ENCODE measurements at regions of chr7 and their contacts with region 1.

Region 1: GRCh38 chr7:24812310-24812945 is 55.2 kb upstream of the GSDME start:
- DNase-seq: no peak
- H3K4me3 ChIP-seq: no peak overlapping the region
- CTCF ChIP-seq: peak; percentile 69

Region 2: GRCh38 chr7:24794751-24795731 is 17.4 kb before region 1 on chr7:
- CTCF ChIA-PET with region 1: interaction called, 114 read pairs
- POLR2A ChIA-PET with region 1: no interaction called
- DNase-seq: no peak
- H3K4me3 ChIP-seq: no peak overlapping the region
- CTCF ChIP-seq: no peak

Region 3: DNA sequence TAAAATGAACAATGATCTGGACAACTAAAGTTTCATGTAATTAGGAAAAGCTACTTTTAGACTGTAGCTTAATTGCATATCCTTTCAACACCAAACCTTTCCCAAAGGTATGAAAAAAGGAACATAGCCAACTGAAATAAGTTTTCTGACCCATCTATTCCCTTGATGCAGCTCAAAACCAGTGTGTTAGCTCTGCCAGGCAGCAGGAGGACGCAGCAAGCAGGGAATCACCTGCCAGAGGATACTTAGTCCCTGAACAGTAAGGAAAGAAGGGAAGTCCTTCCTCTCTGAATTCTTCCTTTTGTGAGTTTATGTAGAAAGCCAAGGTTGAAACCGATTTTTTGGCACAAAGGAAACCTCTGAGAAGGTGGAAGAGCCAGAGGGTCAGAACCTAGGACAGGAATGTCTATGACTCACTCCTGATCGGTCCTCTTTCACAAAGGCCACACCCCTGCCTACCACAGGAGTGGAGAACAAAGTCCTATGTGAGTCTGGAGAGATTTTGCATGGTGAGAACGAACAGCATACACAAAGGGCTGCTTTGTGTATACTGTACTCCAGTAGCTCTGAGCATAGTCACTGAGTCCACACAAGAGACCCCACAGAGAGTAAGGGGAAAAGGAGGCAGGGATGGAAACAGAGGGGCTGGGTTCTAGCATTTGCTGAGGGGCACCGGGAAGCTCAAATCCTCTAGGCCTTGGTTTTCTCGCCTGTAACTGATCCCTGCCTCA is 13.7 kb after region 1 on chr7:
- CTCF ChIA-PET with region 1: interaction called, 43 read pairs
- POLR2A ChIA-PET with region 1: no interaction called
- DNase-seq: no peak
- H3K4me3 ChIP-seq: no peak overlapping the region
- CTCF ChIP-seq: no peak

Region 4: GRCh38 chr7:24979863-24980533 is 167.6 kb after region 1 on chr7 and contains the start of gene OSBPL3:
- CTCF ChIA-PET with region 1: interaction called, 36 read pairs
- POLR2A ChIA-PET with region 1: interaction called, 3 read pairs
- DNase-seq: peak; percentile 66
- H3K4me3 ChIP-seq: peak within 1 kb of the TSS; percentile 76
- CTCF ChIP-seq: no peak

Region 5: GRCh38 chr7:25083201-25083600 is 270.8 kb after region 1 on chr7:
- CTCF ChIA-PET with region 1: interaction called, 928 read pairs
- POLR2A ChIA-PET with region 1: no interaction called
- DNase-seq: no peak
- H3K4me3 ChIP-seq: no peak overlapping the region
- CTCF ChIP-seq: no peak

Region 6: DNA sequence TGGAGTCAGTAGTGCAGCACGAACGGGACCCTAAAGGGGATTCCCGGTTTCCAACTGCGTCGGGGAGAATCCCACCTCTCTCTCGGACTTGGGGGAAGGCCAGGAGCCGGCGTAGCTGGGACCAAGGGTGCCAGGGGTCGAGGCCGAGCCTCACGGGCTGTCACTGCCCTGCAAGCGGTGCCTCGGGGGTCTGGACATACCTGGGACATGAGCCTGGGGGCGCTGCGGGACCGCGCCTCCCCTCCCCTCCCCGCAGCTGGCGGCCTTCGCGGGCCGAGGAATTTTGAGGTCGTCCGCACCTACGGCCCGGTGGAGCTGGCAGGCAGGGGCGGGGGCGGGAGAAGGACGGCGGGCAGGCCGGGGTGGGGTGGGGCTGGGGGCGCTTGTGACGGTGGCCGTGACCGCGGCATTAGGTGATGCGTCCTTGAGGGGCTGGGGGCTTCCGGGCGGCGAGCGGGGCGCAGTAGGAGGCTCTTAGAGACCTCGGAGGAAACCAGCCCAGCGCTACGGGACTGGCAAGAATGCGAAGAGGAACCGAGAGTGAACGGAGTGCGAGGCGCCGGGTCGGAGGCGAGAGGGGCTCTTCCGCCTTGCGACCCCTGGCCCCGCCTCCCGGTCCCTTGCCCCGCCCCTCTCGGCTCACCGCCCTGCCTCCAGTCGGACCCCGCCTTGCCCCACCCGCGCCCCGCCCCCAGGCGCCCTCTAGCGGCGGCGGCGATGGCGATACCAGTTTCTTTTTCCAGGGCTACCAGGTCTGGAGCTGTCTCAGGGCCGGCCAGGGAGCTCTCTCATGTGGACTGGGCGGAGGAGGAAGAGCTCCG is 367.6 kb after region 1 on chr7:
- CTCF ChIA-PET with region 1: no interaction called
- POLR2A ChIA-PET with region 1: no interaction called
- DNase-seq: no peak
- H3K4me3 ChIP-seq: peak overlapping the region; percentile 85
- CTCF ChIP-seq: peak; percentile 80